ENCODE measurements at regions of chr20 and their contacts with region 1.

Region 1: DNA sequence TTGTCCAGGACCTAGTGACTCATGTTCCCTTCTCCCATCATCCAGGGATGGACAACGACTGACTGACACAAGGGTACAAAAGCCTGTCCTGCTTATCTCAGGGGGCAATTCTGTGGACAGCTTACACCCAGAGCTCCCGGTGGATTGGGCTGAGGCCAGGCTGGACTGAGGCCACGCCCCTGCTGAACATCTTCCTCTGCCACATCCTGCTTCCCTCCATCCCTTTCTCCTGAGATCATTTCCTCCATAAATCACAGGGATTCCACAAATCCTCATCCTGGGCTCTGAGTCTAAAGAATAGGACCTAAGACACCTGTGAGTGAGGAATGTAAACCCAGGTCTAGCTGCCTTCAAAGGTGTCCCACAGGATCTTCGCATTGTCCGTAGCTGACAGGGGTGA is 30.4 kb upstream of the RNF24 start:
- DNase-seq: peak in 1 of 2 experiments; percentile 37
- H3K4me3 ChIP-seq: no peak overlapping the region
- H3K27ac ChIP-seq: no peak overlapping the region
- H3K4me1 ChIP-seq: peaks cover 20% of the 10 kb centered on the region
- H3K27me3 ChIP-seq: no peaks in the 10 kb centered on the region
- CTCF ChIP-seq: no peak

Region 2: GRCh38 chr20:3687653-3688052 is 358.1 kb before region 1 on chr20:
- CTCF ChIA-PET with region 1: no interaction called
- POLR2A ChIA-PET with region 1: no interaction called
- intact Hi-C with region 1: no loop called
- DNase-seq: peak in 1 of 2 experiments; percentile 33
- H3K4me3 ChIP-seq: no peak overlapping the region
- H3K27ac ChIP-seq: no peak overlapping the region
- H3K4me1 ChIP-seq: no peaks in the 10 kb centered on the region
- H3K27me3 ChIP-seq: peaks cover 17% of the 10 kb centered on the region; the same call in 1 of the 2 replicates
- CTCF ChIP-seq: no peak

Region 3: DNA sequence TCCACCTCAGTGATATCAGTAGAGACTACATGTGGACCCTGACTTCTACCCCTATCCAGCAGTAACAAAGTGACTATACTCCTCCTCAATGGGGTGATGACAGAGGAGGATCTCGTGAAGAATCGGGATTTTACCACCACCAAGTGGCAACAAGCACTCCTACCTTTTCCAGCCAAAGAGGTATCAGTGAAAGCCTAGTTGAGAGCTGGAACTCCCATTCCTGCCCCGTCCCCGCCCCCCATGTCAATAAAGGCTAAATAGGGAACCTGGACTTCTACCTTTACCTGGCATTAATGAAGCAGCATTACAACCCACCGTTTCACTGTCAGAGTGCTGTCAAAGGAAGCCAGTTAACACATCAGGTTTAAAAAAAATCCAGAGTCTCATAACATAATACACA is 75.7 kb before region 1 on chr20:
- CTCF ChIA-PET with region 1: no interaction called
- POLR2A ChIA-PET with region 1: no interaction called
- intact Hi-C with region 1: no loop called
- DNase-seq: no peak
- H3K4me3 ChIP-seq: no peak overlapping the region
- H3K27ac ChIP-seq: no peak overlapping the region
- H3K4me1 ChIP-seq: no peaks in the 10 kb centered on the region
- H3K27me3 ChIP-seq: no peaks in the 10 kb centered on the region
- CTCF ChIP-seq: no peak

Region 4: GRCh38 chr20:4006640-4007039 is 39.1 kb before region 1 on chr20:
- CTCF ChIA-PET with region 1: no interaction called
- POLR2A ChIA-PET with region 1: interaction called, 10 read pairs
- intact Hi-C with region 1: no loop called
- DNase-seq: no peak
- H3K4me3 ChIP-seq: no peak overlapping the region
- H3K27ac ChIP-seq: no peak overlapping the region
- H3K4me1 ChIP-seq: peaks cover 1% of the 10 kb centered on the region
- H3K27me3 ChIP-seq: no peaks in the 10 kb centered on the region
- CTCF ChIP-seq: no peak

Region 5: DNA sequence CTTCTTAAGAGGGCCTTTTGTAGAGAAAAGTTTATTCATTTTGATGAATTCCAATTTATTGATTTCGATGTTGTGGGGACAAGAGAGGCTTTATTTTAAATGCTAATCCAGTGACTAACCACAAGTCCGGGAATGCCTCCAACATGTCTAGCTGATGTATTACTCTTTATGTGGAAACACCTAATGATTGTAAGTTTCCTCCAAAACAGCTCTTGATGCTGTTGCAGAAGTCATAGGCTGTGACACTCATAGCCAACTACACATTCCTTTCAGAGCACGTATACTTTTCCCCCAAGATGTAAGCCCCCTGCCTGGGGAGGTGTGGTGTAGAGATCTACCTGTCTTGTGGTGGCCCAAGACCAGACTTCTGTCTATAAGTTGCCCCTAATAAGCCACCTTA is 30.9 kb after region 1 on chr20:
- CTCF ChIA-PET with region 1: interaction called, 11 read pairs
- POLR2A ChIA-PET with region 1: no interaction called
- intact Hi-C with region 1: no loop called
- DNase-seq: peak; percentile 29 to 89
- H3K4me3 ChIP-seq: no peak overlapping the region
- H3K27ac ChIP-seq: peak overlapping the region; percentile 59
- H3K4me1 ChIP-seq: peaks cover 11% of the 10 kb centered on the region
- H3K27me3 ChIP-seq: no peaks in the 10 kb centered on the region
- CTCF ChIP-seq: no peak

Region 6: GRCh38 chr20:4534315-4534714 is 488.6 kb after region 1 on chr20:
- CTCF ChIA-PET with region 1: no interaction called
- POLR2A ChIA-PET with region 1: no interaction called
- intact Hi-C with region 1: no loop called
- DNase-seq: no peak
- H3K4me3 ChIP-seq: no peak overlapping the region
- H3K27ac ChIP-seq: no peak overlapping the region
- H3K4me1 ChIP-seq: no peaks in the 10 kb centered on the region
- H3K27me3 ChIP-seq: no peaks in the 10 kb centered on the region
- CTCF ChIP-seq: no peak

Region 7: DNA sequence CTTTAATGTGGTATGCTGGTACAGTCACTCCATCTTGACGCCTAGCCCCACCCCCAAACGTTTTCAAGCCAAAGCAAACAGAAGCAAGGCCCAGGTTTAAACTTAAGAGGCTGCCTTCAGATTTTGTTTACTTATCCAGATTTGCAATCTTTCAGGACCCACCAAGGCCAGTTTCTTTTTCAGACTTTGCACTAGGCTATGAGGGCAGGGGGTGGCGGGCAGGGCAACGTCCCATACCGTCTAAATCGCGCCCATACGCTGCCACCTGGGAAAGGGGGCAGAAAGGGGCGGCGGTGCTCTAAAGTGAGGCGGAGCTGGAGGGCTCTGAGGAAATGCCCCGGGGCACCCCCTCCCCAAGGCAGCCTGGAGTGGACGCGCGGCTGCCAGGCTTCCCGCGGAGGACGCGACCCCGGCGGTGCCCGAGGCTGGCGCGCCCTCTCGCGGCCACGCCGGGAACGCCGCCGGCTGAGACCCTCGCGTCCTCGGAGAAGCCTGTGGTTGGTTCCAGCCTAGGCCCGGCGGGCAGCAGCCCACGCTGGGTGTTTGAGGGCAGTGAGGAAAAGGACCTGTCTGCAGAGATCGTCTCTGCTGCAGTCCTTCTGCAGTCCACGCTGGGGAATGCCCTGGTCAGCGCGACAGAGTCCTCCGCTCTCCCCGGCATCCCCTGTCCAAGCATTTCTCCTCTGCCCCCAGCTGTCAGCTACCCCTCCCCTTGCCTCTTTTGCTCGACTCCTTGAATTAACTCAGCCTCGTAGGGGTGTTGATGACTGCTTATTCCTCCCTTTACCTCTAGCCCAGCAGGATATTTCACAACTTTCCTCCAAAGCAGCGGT is 546.8 kb after region 1 on chr20:
- CTCF ChIA-PET with region 1: interaction called, 6 read pairs
- POLR2A ChIA-PET with region 1: interaction called, 11 read pairs
- intact Hi-C with region 1: no loop called
- DNase-seq: peak in 1 of 2 experiments; percentile 67
- H3K4me3 ChIP-seq: peak overlapping the region; percentile 48; the same call in 1 of the 2 replicates
- H3K27ac ChIP-seq: no peak overlapping the region
- H3K4me1 ChIP-seq: peaks cover 5% of the 10 kb centered on the region; the same call in 1 of the 2 replicates
- H3K27me3 ChIP-seq: no peaks in the 10 kb centered on the region
- CTCF ChIP-seq: peak; percentile 89